A673 (cell line): ENCODE measurements at regions of chr14 and their contacts with region 1.

Region 1: DNA sequence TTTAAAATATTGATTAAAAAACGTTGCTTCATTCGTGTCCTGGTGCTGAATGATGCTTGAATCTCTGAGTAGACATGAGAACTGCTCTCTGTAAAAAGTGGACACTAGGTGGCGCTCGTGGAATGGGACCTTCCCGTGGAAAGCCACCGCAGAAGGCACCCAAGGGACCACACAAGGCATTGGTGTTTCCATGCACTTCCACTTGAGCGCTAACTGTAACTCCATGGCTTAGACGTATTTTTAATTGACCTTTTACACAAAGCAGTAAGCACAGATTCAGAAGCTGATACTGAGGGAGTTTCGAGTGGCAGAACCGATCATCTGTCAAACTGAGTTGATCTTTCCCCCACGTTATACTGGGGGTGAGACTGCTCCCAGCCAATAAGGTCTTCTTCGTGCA is 135.3 kb downstream of the PRKCH start:
- DNase-seq: peak; percentile 88
- H3K4me3 ChIP-seq: no peak overlapping the region
- H3K27ac ChIP-seq: no peak overlapping the region
- H3K4me1 ChIP-seq: peaks cover 7% of the 10 kb centered on the region
- H3K27me3 ChIP-seq: no peaks in the 10 kb centered on the region
- CTCF ChIP-seq: peak; percentile 93

Region 2: DNA sequence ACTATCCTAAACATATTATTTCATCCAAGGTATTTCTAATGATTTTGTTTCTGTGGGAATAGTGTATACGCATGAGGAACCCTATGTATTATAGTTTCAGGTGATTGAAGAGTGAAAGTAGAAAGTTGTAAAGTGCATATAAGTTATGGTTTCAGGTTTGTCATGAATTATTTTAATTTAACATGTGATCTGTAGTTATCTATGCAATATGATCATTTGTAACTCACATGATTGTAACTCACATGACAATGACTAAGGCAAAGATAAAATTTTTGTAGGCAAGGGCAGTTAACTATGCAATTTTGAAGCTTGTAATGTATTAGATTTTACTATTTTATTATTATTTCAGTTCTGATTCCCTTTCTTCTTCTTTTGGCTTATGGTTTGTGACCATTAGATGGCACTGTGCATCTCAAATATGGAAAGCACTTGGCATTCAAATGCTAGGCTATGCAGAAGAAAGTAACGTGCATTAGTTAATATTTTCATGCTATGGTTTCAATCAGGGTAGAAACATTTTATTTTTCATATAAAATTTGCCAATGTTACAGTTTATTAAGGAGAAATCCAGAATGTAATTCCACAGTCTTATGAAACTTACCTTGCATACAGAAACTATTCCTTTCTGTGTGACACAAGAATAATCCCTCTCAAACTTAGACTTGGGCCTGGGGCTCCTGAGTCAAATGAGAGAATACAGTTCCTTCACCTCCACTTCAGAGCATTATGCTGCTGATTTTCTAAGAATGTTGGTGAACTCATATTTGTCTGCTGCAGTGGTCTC is 159.8 kb before region 1 on chr14:
- CTCF ChIA-PET with region 1: no interaction called
- POLR2A ChIA-PET with region 1: no interaction called
- intact Hi-C with region 1: loop called (anchors 5 kb)
- DNase-seq: peak; percentile 55
- H3K4me3 ChIP-seq: no peak overlapping the region
- H3K27ac ChIP-seq: no peak overlapping the region
- H3K4me1 ChIP-seq: no peaks in the 10 kb centered on the region
- H3K27me3 ChIP-seq: no peaks in the 10 kb centered on the region
- CTCF ChIP-seq: peak; percentile 81

Region 3: GRCh38 chr14:61315313-61315712 is 141.4 kb before region 1 on chr14:
- CTCF ChIA-PET with region 1: no interaction called
- POLR2A ChIA-PET with region 1: no interaction called
- intact Hi-C with region 1: loop called (anchors 5 kb)
- DNase-seq: no peak
- H3K4me3 ChIP-seq: no peak overlapping the region
- H3K27ac ChIP-seq: no peak overlapping the region
- H3K4me1 ChIP-seq: no peaks in the 10 kb centered on the region
- H3K27me3 ChIP-seq: peaks cover 4% of the 10 kb centered on the region
- CTCF ChIP-seq: no peak